Activated CD8-positive, alpha-beta memory T cell treated with anti-CD3 and anti-CD28 coated beads, Interleukin-2, amount 10 ng/mL, durations not matched to agents 7 days and 5 days (primary cell): ENCODE measurements at regions of chr11 and their contacts with region 1.

Region 1: DNA sequence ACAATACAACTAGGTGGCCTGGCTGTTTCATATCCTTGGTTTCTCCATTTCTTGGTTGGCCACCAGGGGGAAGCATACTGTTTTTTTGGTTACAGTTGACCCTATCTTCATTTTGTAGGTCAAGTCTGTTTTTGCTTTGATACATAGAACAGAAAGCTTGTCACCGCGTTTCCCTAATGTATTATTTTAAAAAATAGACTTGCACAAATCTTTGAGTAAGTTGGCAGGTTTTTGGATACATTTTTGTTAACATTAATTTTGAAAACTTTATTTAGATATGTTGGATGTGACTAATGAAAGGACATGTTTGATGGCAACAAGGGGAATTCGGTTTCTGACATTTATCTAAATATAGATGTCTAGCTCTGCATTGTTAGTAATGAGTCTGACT is 3.0 kb downstream of the NCR3LG1 start:
- DNase-seq: peak; percentile 78
- ATAC-seq: no peak
- H3K4me3 Mint-ChIP-seq: no peak overlapping the region
- H3K27ac Mint-ChIP-seq: no peak overlapping the region
- H3K4me1 Mint-ChIP-seq: peaks cover 28% of the 10 kb centered on the region
- H3K27me3 Mint-ChIP-seq: peaks cover 30% of the 10 kb centered on the region

Region 2: GRCh38 chr11:17276236-17277023 is 78.2 kb before region 1 on chr11 and contains the start of gene NUCB2:
- CTCF ChIA-PET with region 1: interaction called, 13 read pairs
- DNase-seq: peak; percentile 97
- ATAC-seq: peak; percentile 97
- H3K4me3 Mint-ChIP-seq: peak within 1 kb of the TSS; percentile 95
- H3K27ac Mint-ChIP-seq: peak within 1 kb of the TSS; percentile 91
- H3K4me1 Mint-ChIP-seq: peaks cover 44% of the 10 kb centered on the region
- H3K27me3 Mint-ChIP-seq: peaks cover 17% of the 10 kb centered on the region
- total RNA-seq, gene NUCB2: 79.4 to 100.0 TPM

Region 3: GRCh38 chr11:17412488-17413180 is 58.0 kb after region 1 on chr11:
- CTCF ChIA-PET with region 1: no interaction called
- DNase-seq: no peak
- ATAC-seq: no peak
- H3K4me3 Mint-ChIP-seq: no peak overlapping the region
- H3K27ac Mint-ChIP-seq: no peak overlapping the region
- H3K4me1 Mint-ChIP-seq: peaks cover 24% of the 10 kb centered on the region
- H3K27me3 Mint-ChIP-seq: peaks cover 20% of the 10 kb centered on the region